Psoas muscle (tissue), 8 donors: ENCODE measurements at regions of chr2 and their contacts with region 1.

Region 1: GRCh38 chr2:88751768-88752167 is 60.3 kb downstream of the RPIA start:
- DNase-seq: no peak
- ATAC-seq: no peak
- H3K4me3 ChIP-seq: no peak overlapping the region
- H3K27ac ChIP-seq: no peak overlapping the region
- H3K4me1 ChIP-seq: peaks cover 14% of the 10 kb centered on the region
- H3K27me3 ChIP-seq: no peaks in the 10 kb centered on the region
- CTCF ChIP-seq: no peak

Region 2: DNA sequence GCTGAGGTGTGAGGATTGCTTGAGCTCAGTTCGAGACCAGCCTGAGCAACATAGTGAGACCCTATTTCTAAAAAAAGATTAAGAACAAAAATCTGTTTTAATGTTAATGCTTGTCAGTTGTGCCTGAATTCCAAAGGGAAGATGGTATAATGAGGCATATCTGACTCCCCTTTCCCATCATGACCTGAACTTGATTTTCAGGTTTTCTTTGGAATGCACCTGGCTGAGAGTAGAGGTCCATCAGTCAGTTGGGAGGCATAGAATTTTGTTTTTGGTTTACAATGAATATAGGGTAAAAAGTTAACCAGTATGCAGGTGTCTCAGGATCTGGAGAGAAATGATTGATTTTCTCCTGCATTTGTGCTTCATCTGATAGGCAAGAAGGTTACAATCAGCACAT is 39.9 kb before region 1 on chr2:
- intact Hi-C with region 1: no loop called
- DNase-seq: no peak
- ATAC-seq: no peak
- H3K4me3 ChIP-seq: no peak overlapping the region
- H3K27ac ChIP-seq: no peak overlapping the region
- H3K4me1 ChIP-seq: peaks cover 9% of the 10 kb centered on the region
- H3K27me3 ChIP-seq: no peaks in the 10 kb centered on the region
- CTCF ChIP-seq: no peak

Region 3: GRCh38 chr2:88857951-88858411 is 106.2 kb after region 1 on chr2:
- intact Hi-C with region 1: loop called in 1 of 2 experiments (anchors 1 kb)
- DNase-seq: no peak
- ATAC-seq: no peak
- H3K4me3 ChIP-seq: no peak overlapping the region
- H3K27ac ChIP-seq: no peak overlapping the region
- H3K4me1 ChIP-seq: no peaks in the 10 kb centered on the region
- H3K27me3 ChIP-seq: peaks cover 0 to 2% (median 0%) of the 10 kb centered on the region in 3 donors
- CTCF ChIP-seq: no peak

Region 4: DNA sequence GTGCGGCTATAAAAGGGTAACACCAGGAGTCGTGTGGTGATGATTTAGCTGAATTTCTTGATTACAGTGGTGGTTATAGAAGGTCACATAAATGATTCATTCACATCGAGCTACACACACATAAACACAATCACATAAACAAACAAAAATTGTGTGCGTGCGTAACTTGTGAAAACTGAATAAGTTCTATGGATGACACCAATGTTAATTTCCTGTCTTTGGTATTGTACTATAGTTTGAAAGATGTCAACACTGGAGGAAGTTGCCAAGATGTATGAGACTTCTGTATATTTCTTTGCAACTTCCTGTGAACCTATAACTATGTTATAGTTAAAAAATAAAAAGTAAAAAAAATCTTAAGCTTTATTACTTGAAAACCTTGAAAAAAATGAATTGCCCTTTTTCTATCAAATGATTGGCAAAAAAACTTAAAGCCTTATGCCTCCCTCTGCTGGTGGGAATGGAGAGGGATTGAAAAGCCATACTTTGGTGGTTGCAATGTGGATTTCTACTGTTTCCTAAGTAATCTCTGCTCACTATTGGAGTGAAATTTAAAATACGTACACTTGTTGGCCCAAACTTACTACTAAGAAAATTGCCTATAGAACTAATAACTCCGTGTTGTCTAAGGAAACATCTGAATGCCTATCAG is 167.4 kb after region 1 on chr2:
- intact Hi-C with region 1: no loop called
- DNase-seq: no peak
- ATAC-seq: no peak
- H3K4me3 ChIP-seq: no peak overlapping the region
- H3K27ac ChIP-seq: no peak overlapping the region
- H3K4me1 ChIP-seq: no peaks in the 10 kb centered on the region
- H3K27me3 ChIP-seq: no peaks in the 10 kb centered on the region
- CTCF ChIP-seq: peak; percentile 44